ENCODE measurements at regions of chrX and their contacts with region 1.

Region 1: GRCh38 chrX:107776649-107777535 is 641 bp upstream of the NCBP2L start:
- DNase-seq: peak; percentile 85
- H3K4me3 Mint-ChIP-seq: peak overlapping the region; percentile 85
- H3K27ac Mint-ChIP-seq: peak overlapping the region; percentile 68
- H3K4me1 Mint-ChIP-seq: peaks cover 4% of the 10 kb centered on the region
- H3K27me3 Mint-ChIP-seq: no peaks in the 10 kb centered on the region

Region 2: GRCh38 chrX:106894392-106894909 is 882.4 kb before region 1 on chrX:
- CTCF ChIA-PET with region 1: no interaction called
- intact Hi-C with region 1: loop called (anchors 5 kb)
- DNase-seq: peak; percentile 64
- H3K4me3 Mint-ChIP-seq: no peak overlapping the region
- H3K27ac Mint-ChIP-seq: no peak overlapping the region
- H3K4me1 Mint-ChIP-seq: peaks cover 5% of the 10 kb centered on the region
- H3K27me3 Mint-ChIP-seq: no peaks in the 10 kb centered on the region

Region 3: DNA sequence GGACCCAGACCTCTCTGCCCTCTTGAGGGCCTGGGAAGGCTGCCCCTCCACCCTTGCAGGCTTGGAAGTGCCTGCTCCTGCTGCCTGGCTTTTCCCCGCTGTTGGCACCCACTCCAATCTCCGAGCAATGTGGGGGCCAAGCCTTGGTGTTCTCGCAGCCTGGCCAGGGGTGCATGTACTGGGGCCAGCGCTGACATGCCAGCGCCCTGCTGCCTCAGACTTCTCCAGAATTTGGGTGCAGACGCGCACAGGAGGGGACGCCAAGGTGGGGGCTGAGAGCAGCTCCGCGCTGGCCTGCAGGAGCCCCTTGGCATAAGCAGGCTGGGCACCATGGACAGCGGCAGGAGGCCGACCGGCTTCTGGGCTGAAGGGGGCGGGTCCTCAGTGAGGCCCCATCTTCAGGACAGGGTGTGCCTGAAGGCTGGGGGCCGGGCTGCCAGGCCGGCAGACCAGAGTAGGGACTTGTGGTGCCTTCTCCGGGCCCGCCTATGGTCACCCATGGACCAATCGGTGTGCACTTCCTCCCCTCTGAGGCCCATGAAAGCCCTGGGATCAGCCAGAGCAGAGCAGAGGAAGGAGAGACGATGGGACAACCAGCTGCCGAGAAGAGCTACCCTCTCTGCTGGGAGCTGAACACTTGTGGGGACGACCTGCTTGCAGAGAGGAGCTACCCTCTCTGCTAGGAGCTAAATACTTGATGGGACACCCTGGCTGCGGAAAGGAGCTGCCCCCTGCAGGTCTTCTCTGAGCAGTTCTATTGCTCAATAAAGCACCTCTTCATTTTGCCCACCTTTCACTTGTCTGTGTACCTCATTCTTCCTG is 452.2 kb before region 1 on chrX:
- CTCF ChIA-PET with region 1: no interaction called
- intact Hi-C with region 1: loop called (anchors 10 kb)
- DNase-seq: peak; percentile 34
- H3K4me3 Mint-ChIP-seq: no peak overlapping the region
- H3K27ac Mint-ChIP-seq: no peak overlapping the region
- H3K4me1 Mint-ChIP-seq: no peaks in the 10 kb centered on the region
- H3K27me3 Mint-ChIP-seq: no peaks in the 10 kb centered on the region

Region 4: GRCh38 chrX:107627838-107628661 is 148.8 kb before region 1 on chrX and contains the start of gene PRPS1:
- CTCF ChIA-PET with region 1: no interaction called
- intact Hi-C with region 1: loop called (anchors 1 kb)
- DNase-seq: peak; percentile 94
- H3K4me3 Mint-ChIP-seq: peak within 1 kb of the TSS; percentile 91
- H3K27ac Mint-ChIP-seq: peak within 1 kb of the TSS; percentile 95
- H3K4me1 Mint-ChIP-seq: peaks cover 26% of the 10 kb centered on the region
- H3K27me3 Mint-ChIP-seq: no peaks in the 10 kb centered on the region
- total RNA-seq, gene PRPS1: 195 to 196 TPM

Region 5: GRCh38 chrX:107678957-107679740 is 97.7 kb before region 1 on chrX:
- CTCF ChIA-PET with region 1: interaction called, 46 read pairs
- intact Hi-C with region 1: loop called (anchors 1 kb)
- DNase-seq: peak; percentile 87
- H3K4me3 Mint-ChIP-seq: peak overlapping the region; percentile 88
- H3K27ac Mint-ChIP-seq: peak overlapping the region; percentile 94
- H3K4me1 Mint-ChIP-seq: peaks cover 52% of the 10 kb centered on the region
- H3K27me3 Mint-ChIP-seq: no peaks in the 10 kb centered on the region

Region 6: GRCh38 chrX:107753187-107753586 is 23.7 kb before region 1 on chrX:
- CTCF ChIA-PET with region 1: no interaction called
- intact Hi-C with region 1: no loop called
- DNase-seq: no peak
- H3K4me3 Mint-ChIP-seq: no peak overlapping the region
- H3K27ac Mint-ChIP-seq: no peak overlapping the region
- H3K4me1 Mint-ChIP-seq: peaks cover 10% of the 10 kb centered on the region
- H3K27me3 Mint-ChIP-seq: no peaks in the 10 kb centered on the region

Region 7: DNA sequence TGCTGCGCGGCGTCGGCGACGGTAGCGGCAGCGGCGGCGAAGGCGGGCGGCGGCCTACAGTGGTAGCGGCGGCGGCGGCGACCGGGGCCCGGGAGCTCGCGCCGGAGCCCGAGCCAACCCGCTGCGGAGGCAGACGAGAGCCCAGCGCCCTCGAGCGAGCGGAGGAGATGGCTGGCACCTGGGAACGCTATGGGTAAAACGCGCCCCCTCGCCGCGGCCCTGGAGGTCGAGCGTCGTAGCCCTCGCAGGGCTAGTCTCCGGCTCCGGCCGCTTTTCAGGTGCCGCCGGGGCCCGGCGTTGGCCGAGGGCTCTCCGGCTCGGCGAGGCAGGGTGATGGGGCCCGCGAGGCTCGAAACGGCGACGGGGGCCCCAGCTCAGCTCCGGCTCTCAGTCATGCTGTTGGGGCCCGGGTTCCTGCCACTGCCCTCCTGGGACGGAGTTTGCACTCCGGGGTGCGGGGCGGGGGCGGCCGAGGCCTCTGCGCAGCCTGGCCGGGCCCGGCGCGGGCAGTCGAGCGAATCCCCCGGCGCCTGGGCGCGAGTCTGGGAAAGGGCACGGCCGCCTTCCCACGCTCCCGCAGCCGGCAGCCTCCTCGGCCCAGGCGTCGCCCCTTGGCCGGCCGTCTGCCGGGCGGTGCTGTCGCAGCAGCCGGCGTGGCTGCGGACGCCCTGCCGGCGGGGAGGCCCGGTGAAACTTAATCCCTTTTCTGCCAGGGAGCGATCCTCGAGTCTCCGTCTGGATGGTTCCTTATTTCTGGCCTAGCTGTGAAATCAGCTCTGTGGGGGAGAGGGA is 49.5 kb after region 1 on chrX:
- CTCF ChIA-PET with region 1: no interaction called
- intact Hi-C with region 1: loop called (anchors 2 kb)
- DNase-seq: peak; percentile 14
- H3K4me3 Mint-ChIP-seq: peak overlapping the region; percentile 77
- H3K27ac Mint-ChIP-seq: peak overlapping the region; percentile 73
- H3K4me1 Mint-ChIP-seq: peaks cover 53% of the 10 kb centered on the region
- H3K27me3 Mint-ChIP-seq: no peaks in the 10 kb centered on the region

Region 8: DNA sequence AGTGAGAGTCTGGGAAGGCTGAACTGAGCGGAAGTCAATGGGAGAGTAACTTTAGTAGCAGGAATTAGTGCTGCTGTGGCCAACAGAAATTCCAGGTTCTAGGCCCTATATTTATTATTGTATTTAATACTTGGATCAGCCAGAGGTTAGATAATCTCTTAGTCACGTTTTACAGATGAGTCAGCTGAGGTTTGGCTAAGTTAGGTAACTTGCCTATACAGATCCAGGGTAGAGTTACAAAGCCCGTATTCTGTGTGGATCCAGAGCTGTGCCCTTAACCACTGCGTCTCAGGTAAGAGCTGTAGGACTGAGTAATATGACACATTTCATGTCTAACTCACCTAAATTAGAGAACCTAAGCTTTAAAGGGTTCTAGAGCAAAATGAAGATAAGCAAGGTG is 294.0 kb after region 1 on chrX:
- CTCF ChIA-PET with region 1: interaction called, 3 read pairs
- intact Hi-C with region 1: loop called (anchors 2 kb)
- DNase-seq: no peak
- H3K4me3 Mint-ChIP-seq: no peak overlapping the region
- H3K27ac Mint-ChIP-seq: no peak overlapping the region
- H3K4me1 Mint-ChIP-seq: peaks cover 7% of the 10 kb centered on the region
- H3K27me3 Mint-ChIP-seq: no peaks in the 10 kb centered on the region

Measured in activated naive CD4-positive, alpha-beta T cell treated with anti-CD3 and anti-CD28 coated beads for 36 hours (primary cell).